Posterior cingulate gyrus (tissue), 11 donors: ENCODE measurements at regions of chr11 and their contacts with region 1.

Region 1: DNA sequence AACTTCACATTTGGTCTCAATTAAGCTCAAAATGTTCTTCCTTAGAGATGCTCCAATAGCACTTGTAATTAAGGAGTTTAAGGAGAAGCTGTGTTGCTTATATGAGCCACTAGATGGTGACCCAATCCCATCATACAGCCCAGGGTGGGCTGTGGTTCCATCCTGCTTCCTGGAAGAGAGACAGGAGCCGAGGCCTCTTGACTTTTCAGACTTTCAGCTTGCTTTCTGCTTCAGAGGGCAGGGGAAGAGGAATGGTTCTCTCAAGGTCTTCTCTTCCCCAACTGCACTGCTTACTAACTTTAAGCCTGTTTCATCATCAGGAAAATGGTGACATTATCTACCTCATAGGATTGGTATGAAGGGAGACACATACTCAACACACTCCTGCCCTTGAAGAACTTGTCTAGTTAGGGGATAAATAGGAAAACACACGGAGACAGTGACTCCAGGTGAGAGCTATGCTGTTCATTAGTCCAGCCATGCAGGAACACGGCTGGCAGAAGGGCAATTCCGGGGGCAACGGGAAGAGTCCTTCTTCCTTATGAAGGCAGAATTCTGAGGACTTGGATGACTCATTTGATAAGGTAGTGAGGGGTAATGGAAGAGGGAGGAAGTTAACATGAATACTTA is 20.1 kb downstream of the TMEM218 start:
- DNase-seq: peak in 4 of 10 donors; percentile 38 to 89 (median 60)

Region 2: DNA sequence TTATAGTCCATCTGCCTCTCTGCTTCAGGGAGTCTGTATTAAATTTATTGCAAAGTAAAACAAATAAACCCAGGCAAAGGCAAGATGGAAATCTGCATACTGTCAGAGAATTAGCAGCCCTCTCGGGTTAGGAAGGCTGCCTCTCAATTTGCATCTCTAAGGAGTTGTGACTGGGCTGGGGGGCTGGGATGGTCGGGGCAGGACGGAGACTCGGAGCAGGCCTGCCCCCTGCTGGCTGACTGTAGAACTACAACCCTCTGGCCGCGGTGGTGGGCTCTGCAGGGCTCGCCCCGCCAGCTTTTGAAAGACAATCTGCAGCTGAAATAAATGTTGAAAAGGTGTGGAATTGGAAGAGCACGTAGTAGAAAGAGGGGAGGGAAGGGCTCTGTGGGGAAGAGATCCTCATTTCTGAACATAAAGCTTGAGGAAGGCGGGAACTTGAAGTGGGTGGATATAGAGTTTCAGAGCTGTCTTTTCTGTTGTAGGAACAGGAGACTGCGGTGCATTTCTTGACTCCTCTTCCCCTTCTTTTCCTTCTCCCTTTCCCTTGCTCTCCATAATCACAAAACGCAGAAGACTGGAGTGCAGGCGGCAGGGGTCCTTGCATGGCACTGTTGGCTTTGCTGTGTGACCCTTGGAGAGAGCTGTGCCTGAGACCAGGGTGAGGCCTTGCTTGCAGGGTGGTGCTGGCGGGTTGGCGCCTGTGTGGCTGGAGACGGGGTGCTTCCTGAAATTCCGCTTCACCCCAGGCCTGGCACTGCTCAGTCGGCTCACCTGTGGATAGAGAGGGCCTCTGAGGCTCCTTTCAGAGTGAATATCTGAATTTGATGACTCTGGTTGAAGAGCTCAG is 50.5 kb after region 1 on chr11:
- intact Hi-C with region 1: loop called (anchors 5 kb)
- DNase-seq: peak in 8 of 10 donors; percentile 38 to 91 (median 58)

Region 3: DNA sequence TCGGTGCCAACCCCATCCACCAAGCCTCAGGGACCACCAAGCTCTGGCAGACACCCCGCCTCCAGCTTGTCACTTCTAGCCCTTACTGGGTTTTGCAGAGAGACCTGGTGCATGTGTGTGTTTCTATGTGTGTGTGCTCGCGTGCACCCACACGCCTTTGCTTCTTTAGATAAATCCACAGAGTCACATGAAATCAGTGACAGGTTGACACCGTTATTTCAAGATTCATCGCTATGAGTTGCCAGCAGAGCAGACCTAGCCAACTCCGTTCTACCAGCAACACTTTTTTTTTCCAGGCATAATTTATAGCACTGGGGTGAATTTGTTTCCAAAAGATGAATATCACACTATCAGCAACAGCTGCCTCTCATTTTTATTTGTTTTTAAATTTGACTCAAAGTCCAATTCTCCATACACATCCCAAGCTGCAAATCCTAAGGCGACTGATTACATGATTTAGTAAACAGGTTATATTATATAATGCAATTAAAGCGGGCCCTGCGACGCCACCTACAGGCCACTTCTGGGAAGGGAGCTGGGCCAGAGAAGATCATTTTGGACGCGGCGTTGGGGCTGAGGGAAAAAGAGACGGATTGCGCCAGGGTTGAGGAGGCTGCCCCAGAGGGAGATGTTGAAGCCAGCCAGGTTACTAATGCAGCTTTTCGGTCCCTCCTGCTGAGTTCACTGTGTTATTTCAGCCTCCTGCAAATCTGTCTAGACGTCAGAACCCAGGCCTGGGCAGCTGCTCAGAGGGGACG is 254.2 kb after region 1 on chr11:
- intact Hi-C with region 1: loop called (anchors 5 kb)
- DNase-seq: peak; percentile 62 to 93 (median 76)

Region 4: GRCh38 chr11:125404776-125405435 is 313.5 kb after region 1 on chr11:
- intact Hi-C with region 1: loop called (anchors 5 kb)
- DNase-seq: peak; percentile 64 to 96 (median 83)

Region 5: DNA sequence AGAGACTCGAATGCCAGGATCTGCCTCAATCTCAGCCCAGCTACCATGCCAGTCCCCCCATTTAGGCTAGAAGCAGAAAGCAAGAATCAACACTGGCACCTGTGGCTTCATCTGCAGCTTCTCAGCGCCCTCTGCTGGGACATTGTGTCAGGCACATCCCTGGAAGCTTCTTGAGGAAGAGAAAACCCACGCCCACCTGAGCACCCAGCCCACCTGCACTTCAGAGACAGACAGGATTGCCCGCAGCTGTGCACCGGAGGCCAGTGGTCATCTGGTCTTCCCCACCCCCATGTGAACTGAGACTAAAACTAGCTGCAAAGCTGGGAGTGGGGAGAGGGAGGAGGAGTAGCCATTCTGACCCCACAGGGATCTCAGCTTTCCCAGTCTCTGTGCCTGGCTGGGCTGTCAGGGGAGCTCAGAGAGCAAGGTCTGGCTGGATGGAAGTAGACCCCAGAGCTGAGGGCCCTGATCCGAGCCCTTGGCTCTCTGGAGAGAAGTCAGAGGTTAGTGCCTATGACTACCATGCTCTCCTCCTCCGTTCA is 337.9 kb after region 1 on chr11:
- intact Hi-C with region 1: loop called (anchors 5 kb)
- DNase-seq: peak; percentile 59 to 95 (median 80)

Region 6: GRCh38 chr11:125874556-125875124 is 783.3 kb after region 1 on chr11:
- intact Hi-C with region 1: loop called (anchors 10 kb)
- DNase-seq: peak in 8 of 10 donors; percentile 40 to 92 (median 69)